ENCODE measurements at regions of chr17 and their contacts with region 1.

Region 1: DNA sequence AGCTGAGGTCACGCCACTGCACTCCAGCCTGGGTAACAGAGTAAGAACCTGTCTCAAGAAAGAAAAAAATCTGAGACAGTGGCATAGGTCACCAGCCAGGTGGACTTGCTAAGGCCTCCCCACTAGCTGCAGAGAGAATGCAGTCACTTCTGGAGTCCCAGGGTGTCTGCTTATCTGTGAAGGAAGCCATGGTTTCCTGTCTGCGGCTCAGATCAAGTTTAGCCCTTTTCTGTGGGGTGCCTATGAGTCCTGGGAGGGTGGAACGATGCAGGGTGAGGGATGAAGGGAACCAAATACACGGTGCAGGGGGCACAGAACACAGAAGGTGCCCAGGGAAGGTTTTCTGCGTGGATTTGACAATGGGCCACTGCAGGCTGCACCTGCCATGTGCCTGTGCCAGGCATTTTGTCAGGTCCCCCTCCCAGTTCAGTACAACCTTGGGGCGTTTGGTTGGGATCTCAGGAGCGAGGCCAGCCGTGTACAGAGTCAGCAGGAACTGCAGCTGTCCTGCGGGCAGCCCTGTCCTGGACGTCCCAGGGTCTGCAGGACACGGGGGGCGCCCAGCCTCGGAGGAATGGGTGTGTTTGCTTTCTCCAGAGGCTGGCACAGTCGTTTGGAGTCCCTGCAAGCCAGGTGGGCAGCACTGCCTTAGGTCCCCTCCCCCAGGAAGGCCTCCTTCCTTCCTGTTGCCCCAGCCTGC is 41.8 kb downstream of the RAB11FIP4 start:
- DNase-seq: no peak
- ATAC-seq: no peak
- H3K4me3 ChIP-seq: no peak overlapping the region
- H3K27ac ChIP-seq: no peak overlapping the region
- H3K4me1 ChIP-seq: no peaks in the 10 kb centered on the region
- CTCF ChIP-seq: no peak
- EP300 ChIP-seq: no peak
- POLR2A ChIP-seq: no peak
- RAD21 ChIP-seq: no peak

Region 2: GRCh38 chr17:31349454-31349853 is 83.8 kb before region 1 on chr17:
- CTCF ChIA-PET with region 1: no interaction called
- POLR2A ChIA-PET with region 1: no interaction called
- DNase-seq: no peak
- ATAC-seq: no peak
- H3K4me3 ChIP-seq: no peak overlapping the region
- H3K27ac ChIP-seq: no peak overlapping the region
- H3K4me1 ChIP-seq: no peaks in the 10 kb centered on the region
- CTCF ChIP-seq: no peak
- EP300 ChIP-seq: no peak
- POLR2A ChIP-seq: no peak
- RAD21 ChIP-seq: no peak

Region 3: GRCh38 chr17:31413874-31414549 is 19.2 kb before region 1 on chr17:
- CTCF ChIA-PET with region 1: interaction called, 24 read pairs
- POLR2A ChIA-PET with region 1: no interaction called
- DNase-seq: no peak
- ATAC-seq: peak in 1 of 2 experiments; percentile 34; a peak in 3 of 6 replicates
- H3K4me3 ChIP-seq: no peak overlapping the region
- H3K27ac ChIP-seq: no peak overlapping the region
- H3K4me1 ChIP-seq: no peaks in the 10 kb centered on the region; the same call in 2 of the 3 replicates
- CTCF ChIP-seq: no peak
- EP300 ChIP-seq: no peak
- POLR2A ChIP-seq: no peak
- RAD21 ChIP-seq: no peak

Region 4: GRCh38 chr17:31467502-31468256 is 34.4 kb after region 1 on chr17:
- CTCF ChIA-PET with region 1: interaction called, 19 read pairs
- POLR2A ChIA-PET with region 1: no interaction called
- DNase-seq: no peak
- ATAC-seq: peak in 1 of 2 experiments; percentile 30; a peak in 2 of 6 replicates
- H3K4me3 ChIP-seq: no peak overlapping the region
- H3K27ac ChIP-seq: no peak overlapping the region
- H3K4me1 ChIP-seq: no peaks in the 10 kb centered on the region
- CTCF ChIP-seq: no peak
- EP300 ChIP-seq: no peak
- POLR2A ChIP-seq: no peak
- RAD21 ChIP-seq: no peak

Region 5: GRCh38 chr17:31508288-31509094 is 75.2 kb after region 1 on chr17:
- CTCF ChIA-PET with region 1: interaction called, 94 read pairs
- POLR2A ChIA-PET with region 1: no interaction called
- DNase-seq: peak; percentile 31 to 41
- ATAC-seq: peak; percentile 56 to 82; a peak in 4 of 6 replicates
- H3K4me3 ChIP-seq: no peak overlapping the region
- H3K27ac ChIP-seq: no peak overlapping the region
- H3K4me1 ChIP-seq: no peaks in the 10 kb centered on the region
- CTCF ChIP-seq: no peak
- EP300 ChIP-seq: no peak
- POLR2A ChIP-seq: no peak
- RAD21 ChIP-seq: no peak

Region 6: GRCh38 chr17:31541559-31541958 is 108.3 kb after region 1 on chr17:
- CTCF ChIA-PET with region 1: interaction called, 24 read pairs
- POLR2A ChIA-PET with region 1: no interaction called
- DNase-seq: peak in 1 of 2 experiments; percentile 42
- ATAC-seq: peak; percentile 75 to 82
- H3K4me3 ChIP-seq: no peak overlapping the region
- H3K27ac ChIP-seq: no peak overlapping the region
- H3K4me1 ChIP-seq: no peaks in the 10 kb centered on the region
- CTCF ChIP-seq: no peak
- EP300 ChIP-seq: no peak
- POLR2A ChIP-seq: no peak
- RAD21 ChIP-seq: no peak

Measured in A549 (cell line).